ENCODE measurements at regions of chr6 and their contacts with region 1.

Region 1: GRCh38 chr6:33200219-33201146 is at the starts of genes RXRB and SLC39A7:
- DNase-seq: peak; percentile 100
- ATAC-seq: peak; percentile 74
- H3K4me3 ChIP-seq: peak within 1 kb of the TSS; percentile 83 to 99 (median 95)
- H3K4me3 Mint-ChIP-seq: peak within 1 kb of the TSS; percentile 99
- H3K27ac ChIP-seq: peak within 1 kb of the TSS; percentile 93 to 94
- H3K27ac Mint-ChIP-seq: peak within 1 kb of the TSS; percentile 99
- H3K4me1 ChIP-seq: peaks cover 30 to 57% of the 10 kb centered on the region in 2 donors
- H3K4me1 Mint-ChIP-seq: peaks cover 71% of the 10 kb centered on the region
- H3K27me3 ChIP-seq: no peaks in the 10 kb centered on the region
- H3K27me3 Mint-ChIP-seq: no peaks in the 10 kb centered on the region
- CTCF ChIP-seq: no peak
- total RNA-seq, gene RXRB: 94.1 and 99.9 TPM in 2 replicates
- total RNA-seq, gene SLC39A7: 26.1 and 29.6 TPM in 2 replicates

Region 2: DNA sequence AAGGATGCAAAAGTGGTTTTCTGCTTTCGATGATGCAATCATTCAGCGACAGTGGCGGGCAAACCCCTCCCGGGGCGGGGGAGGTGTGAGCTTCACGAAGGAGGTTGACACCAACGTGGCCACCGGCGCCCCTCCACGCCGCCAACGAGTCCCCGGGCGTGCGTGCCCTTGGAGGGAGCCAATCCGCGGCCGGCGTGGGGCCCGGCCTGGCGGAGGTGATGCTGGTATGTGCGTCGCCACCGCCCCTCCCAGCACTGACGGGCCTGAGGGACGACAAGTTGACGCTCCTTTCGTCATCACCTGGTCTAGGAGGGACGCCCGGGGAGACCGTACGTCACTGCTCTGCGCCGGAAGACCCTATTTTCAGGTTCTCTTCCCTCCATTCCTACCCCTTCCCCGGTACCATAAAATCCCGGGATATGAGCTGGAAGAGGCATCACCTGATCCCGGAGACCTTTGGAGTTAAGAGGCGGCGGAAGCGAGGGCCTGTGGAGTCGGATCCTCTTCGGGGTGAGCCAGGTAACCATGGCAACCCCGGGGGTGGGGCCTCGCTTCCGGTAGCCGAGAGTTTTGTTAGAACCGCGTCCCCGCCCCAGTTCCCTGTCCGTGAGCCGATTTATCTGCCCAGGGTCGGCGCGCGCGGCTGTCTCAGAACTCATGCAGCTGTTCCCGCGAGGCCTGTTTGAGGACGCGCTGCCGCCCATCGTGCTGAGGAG is 1228.3 kb before region 1 on chr6 and contains the start of gene DXO:
- CTCF ChIA-PET with region 1: no interaction called
- POLR2A ChIA-PET with region 1: no interaction called
- intact Hi-C with region 1: loop called (anchors 10 kb)
- DNase-seq: peak; percentile 100
- ATAC-seq: peak; percentile 89
- H3K4me3 ChIP-seq: peak within 1 kb of the TSS; percentile 51 to 92 (median 80)
- H3K4me3 Mint-ChIP-seq: peak within 1 kb of the TSS; percentile 98
- H3K27ac ChIP-seq: peak within 1 kb of the TSS; percentile 96 to 100
- H3K27ac Mint-ChIP-seq: peak within 1 kb of the TSS; percentile 100
- H3K4me1 ChIP-seq: peaks cover 18 to 23% of the 10 kb centered on the region in 2 donors
- H3K4me1 Mint-ChIP-seq: peaks cover 34% of the 10 kb centered on the region
- H3K27me3 ChIP-seq: no peaks in the 10 kb centered on the region
- H3K27me3 Mint-ChIP-seq: no peaks in the 10 kb centered on the region
- CTCF ChIP-seq: no peak
- total RNA-seq, gene DXO: 33.9 and 36.1 TPM in 2 replicates

Region 3: GRCh38 chr6:32920715-32921114 is 279.8 kb before region 1 on chr6:
- CTCF ChIA-PET with region 1: no interaction called
- POLR2A ChIA-PET with region 1: interaction called, 13 read pairs
- intact Hi-C with region 1: no loop called
- DNase-seq: peak; percentile 44
- ATAC-seq: peak; percentile 51
- H3K4me3 ChIP-seq: peak overlapping the region in 2 of 5 experiments; percentile 18 to 47
- H3K4me3 Mint-ChIP-seq: peak overlapping the region; percentile 21
- H3K27ac ChIP-seq: peak overlapping the region; percentile 21 to 58
- H3K27ac Mint-ChIP-seq: peak overlapping the region; percentile 57
- H3K4me1 ChIP-seq: peaks cover 33 to 57% of the 10 kb centered on the region in 2 donors
- H3K4me1 Mint-ChIP-seq: peaks cover 65% of the 10 kb centered on the region
- H3K27me3 ChIP-seq: no peaks in the 10 kb centered on the region
- H3K27me3 Mint-ChIP-seq: no peaks in the 10 kb centered on the region
- CTCF ChIP-seq: no peak

Region 4: GRCh38 chr6:33271458-33272274 is 71.2 kb after region 1 on chr6 and contains the starts of genes RPS18 and VPS52:
- CTCF ChIA-PET with region 1: interaction called, 4 read pairs
- POLR2A ChIA-PET with region 1: no interaction called
- intact Hi-C with region 1: loop called (anchors 2 kb)
- DNase-seq: peak; percentile 99
- ATAC-seq: peak; percentile 86
- H3K4me3 ChIP-seq: peak within 1 kb of the TSS; percentile 81 to 95 (median 86)
- H3K4me3 Mint-ChIP-seq: peak within 1 kb of the TSS; percentile 94
- H3K27ac ChIP-seq: peak within 1 kb of the TSS; percentile 89 to 94
- H3K27ac Mint-ChIP-seq: peak within 1 kb of the TSS; percentile 99
- H3K4me1 ChIP-seq: peaks cover 47 to 54% of the 10 kb centered on the region in 2 donors
- H3K4me1 Mint-ChIP-seq: peaks cover 62% of the 10 kb centered on the region
- H3K27me3 ChIP-seq: no peaks in the 10 kb centered on the region
- H3K27me3 Mint-ChIP-seq: no peaks in the 10 kb centered on the region
- CTCF ChIP-seq: no peak
- total RNA-seq, gene RPS18: 3,593 and 3,830 TPM in 2 replicates
- total RNA-seq, gene VPS52: 100 and 108 TPM in 2 replicates

Region 5: DNA sequence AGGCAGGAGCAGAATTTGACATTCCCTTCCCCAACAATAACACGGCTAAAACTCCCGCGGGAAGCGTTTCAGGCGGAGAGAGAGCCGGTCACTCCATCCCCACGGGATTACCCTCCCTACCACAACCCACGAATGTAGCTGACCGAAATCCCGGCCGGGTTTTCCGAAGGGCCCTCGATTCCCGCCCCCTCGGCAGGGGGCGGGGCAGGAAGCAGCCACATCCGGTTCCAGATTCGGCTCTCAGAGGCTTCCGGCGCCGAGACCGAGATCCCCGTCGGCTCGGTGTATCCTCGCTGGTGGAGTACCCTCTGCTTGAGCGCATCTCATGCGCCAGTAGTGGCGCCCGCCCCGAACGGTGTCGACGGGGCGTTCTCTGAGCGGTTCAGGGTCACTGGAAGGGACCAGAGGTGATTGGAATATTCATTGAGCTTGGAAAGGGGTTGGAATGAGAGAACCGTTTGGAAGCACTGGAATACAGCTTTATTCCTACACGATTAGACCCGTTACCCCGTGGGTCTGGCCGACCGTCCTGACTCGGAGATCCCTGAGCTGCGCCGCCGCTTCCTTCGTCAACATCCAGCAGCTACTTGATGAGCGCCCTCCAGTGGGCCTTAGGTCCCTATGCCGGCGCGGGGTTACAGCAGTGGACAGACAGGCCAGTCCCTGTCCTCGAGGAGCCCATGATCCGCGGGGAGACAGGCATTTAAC is 98.9 kb after region 1 on chr6:
- CTCF ChIA-PET with region 1: no interaction called
- POLR2A ChIA-PET with region 1: interaction called, 4 read pairs
- intact Hi-C with region 1: loop called (anchors 2 kb)
- DNase-seq: peak; percentile 95
- ATAC-seq: peak; percentile 68
- H3K4me3 ChIP-seq: peak overlapping the region; percentile 71 to 96 (median 79)
- H3K4me3 Mint-ChIP-seq: peak overlapping the region; percentile 99
- H3K27ac ChIP-seq: peak overlapping the region; percentile 86 to 91
- H3K27ac Mint-ChIP-seq: peak overlapping the region; percentile 99
- H3K4me1 ChIP-seq: peaks cover 12 to 24% of the 10 kb centered on the region in 2 donors
- H3K4me1 Mint-ChIP-seq: peaks cover 38% of the 10 kb centered on the region
- H3K27me3 ChIP-seq: no peaks in the 10 kb centered on the region
- H3K27me3 Mint-ChIP-seq: no peaks in the 10 kb centered on the region
- CTCF ChIP-seq: peak; percentile 69

Region 6: GRCh38 chr6:33417903-33418689 is 217.6 kb after region 1 on chr6 and contains the start of gene CUTA:
- CTCF ChIA-PET with region 1: no interaction called
- POLR2A ChIA-PET with region 1: no interaction called
- intact Hi-C with region 1: loop called (anchors 1 kb)
- DNase-seq: peak; percentile 100
- ATAC-seq: peak; percentile 89
- H3K4me3 ChIP-seq: peak within 1 kb of the TSS; percentile 58 to 84 (median 69)
- H3K4me3 Mint-ChIP-seq: peak within 1 kb of the TSS; percentile 96
- H3K27ac ChIP-seq: peak within 1 kb of the TSS; percentile 89 to 93
- H3K27ac Mint-ChIP-seq: peak within 1 kb of the TSS; percentile 97
- H3K4me1 ChIP-seq: peaks cover 40 to 65% of the 10 kb centered on the region in 2 donors
- H3K4me1 Mint-ChIP-seq: peaks cover 63% of the 10 kb centered on the region
- H3K27me3 ChIP-seq: peaks cover 0 to 3% (median 0%) of the 10 kb centered on the region in 4 experiments
- H3K27me3 Mint-ChIP-seq: peaks cover 4% of the 10 kb centered on the region
- CTCF ChIP-seq: peak; percentile 28
- total RNA-seq, gene CUTA: 134 and 137 TPM in 2 replicates